ENCODE measurements at regions of chr5 and their contacts with region 1.

Region 1: GRCh38 chr5:36079200-36079761 is 12.6 kb upstream of the UGT3A2 start:
- DNase-seq: peak; percentile 77
- H3K27ac ChIP-seq: no peak overlapping the region
- CTCF ChIP-seq: peak; percentile 85

Region 2: GRCh38 chr5:36089989-36090564 is 10.8 kb after region 1 on chr5:
- CTCF ChIA-PET with region 1: interaction called, 13 read pairs
- POLR2A ChIA-PET with region 1: no interaction called
- DNase-seq: no peak
- H3K27ac ChIP-seq: no peak overlapping the region
- CTCF ChIP-seq: no peak; the same call in 1 of the 2 replicates